Natural killer cell (primary cell): ENCODE measurements at regions of chrX and their contacts with region 1.

Region 1: DNA sequence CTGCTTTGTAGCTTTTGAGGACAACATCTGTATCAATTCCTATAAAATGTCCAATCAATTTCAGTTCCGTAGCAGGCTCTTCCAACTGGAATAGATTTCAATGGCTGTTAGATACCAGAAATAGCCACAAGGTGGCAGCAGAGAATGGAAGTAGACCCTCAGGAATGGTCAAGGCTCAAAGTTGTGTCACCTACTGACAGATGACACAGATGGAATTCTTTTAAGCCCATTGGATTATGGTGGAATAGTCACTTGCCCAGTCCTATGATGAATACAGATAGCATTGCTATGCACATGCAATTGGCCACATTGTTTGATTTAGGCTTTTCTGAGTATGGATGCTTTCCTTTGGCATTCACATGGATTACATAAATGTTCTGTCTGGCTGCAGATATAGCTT is 130.4 kb upstream of the RADX start:
- DNase-seq: peak in 1 of 2 donors; percentile 64
- ATAC-seq: peak in 2 of 3 donors; percentile 44 to 56
- H3K4me3 ChIP-seq: no peak overlapping the region
- H3K4me3 Mint-ChIP-seq: no peak overlapping the region
- H3K27ac ChIP-seq: no peak overlapping the region
- H3K27ac Mint-ChIP-seq: no peak overlapping the region
- H3K4me1 ChIP-seq: no peaks in the 10 kb centered on the region
- H3K4me1 Mint-ChIP-seq: peaks cover 17 to 23% of the 10 kb centered on the region in 2 donors
- H3K27me3 ChIP-seq: no peaks in the 10 kb centered on the region
- H3K27me3 Mint-ChIP-seq: peaks cover 0 to 14% of the 10 kb centered on the region in 2 donors
- CTCF ChIP-seq: peak; percentile 69

Region 2: DNA sequence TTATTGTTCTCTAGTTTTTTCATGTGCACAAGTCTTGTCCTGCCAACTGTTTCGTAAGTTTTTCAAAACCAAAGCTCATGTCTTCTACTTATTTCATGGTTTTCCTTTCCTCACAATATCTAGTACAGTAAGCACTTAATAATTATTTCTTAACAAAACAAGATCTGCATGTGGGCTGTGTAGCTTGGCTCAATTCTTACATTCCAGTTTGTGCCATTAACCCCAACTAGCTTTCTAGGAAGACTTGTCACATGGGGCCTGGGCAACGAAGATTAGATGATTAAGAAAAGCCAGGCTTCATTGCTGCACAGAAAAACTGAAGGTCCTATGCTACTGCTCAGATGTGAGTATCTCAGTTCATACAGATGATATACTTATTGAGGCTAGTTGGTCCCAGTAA is 1105.5 kb before region 1 on chrX:
- intact Hi-C with region 1: no loop called
- DNase-seq: no peak
- ATAC-seq: no peak
- H3K4me3 ChIP-seq: no peak overlapping the region
- H3K4me3 Mint-ChIP-seq: no peak overlapping the region
- H3K27ac ChIP-seq: no peak overlapping the region
- H3K27ac Mint-ChIP-seq: no peak overlapping the region
- H3K4me1 ChIP-seq: no peaks in the 10 kb centered on the region
- H3K4me1 Mint-ChIP-seq: no peaks in the 10 kb centered on the region
- H3K27me3 ChIP-seq: no peaks in the 10 kb centered on the region
- H3K27me3 Mint-ChIP-seq: no peaks in the 10 kb centered on the region
- CTCF ChIP-seq: no peak

Region 3: GRCh38 chrX:106300239-106300638 is 181.1 kb before region 1 on chrX:
- intact Hi-C with region 1: no loop called
- DNase-seq: no peak
- ATAC-seq: no peak
- H3K4me3 ChIP-seq: no peak overlapping the region
- H3K4me3 Mint-ChIP-seq: no peak overlapping the region
- H3K27ac ChIP-seq: no peak overlapping the region
- H3K27ac Mint-ChIP-seq: no peak overlapping the region
- H3K4me1 ChIP-seq: no peaks in the 10 kb centered on the region
- H3K4me1 Mint-ChIP-seq: no peaks in the 10 kb centered on the region
- H3K27me3 ChIP-seq: no peaks in the 10 kb centered on the region
- H3K27me3 Mint-ChIP-seq: no peaks in the 10 kb centered on the region
- CTCF ChIP-seq: no peak

Region 4: GRCh38 chrX:106499473-106499872 is 18.1 kb after region 1 on chrX:
- intact Hi-C with region 1: no loop called
- DNase-seq: no peak
- ATAC-seq: no peak
- H3K4me3 ChIP-seq: no peak overlapping the region
- H3K4me3 Mint-ChIP-seq: no peak overlapping the region
- H3K27ac ChIP-seq: no peak overlapping the region
- H3K27ac Mint-ChIP-seq: no peak overlapping the region
- H3K4me1 ChIP-seq: no peaks in the 10 kb centered on the region
- H3K4me1 Mint-ChIP-seq: no peaks in the 10 kb centered on the region
- H3K27me3 ChIP-seq: no peaks in the 10 kb centered on the region
- H3K27me3 Mint-ChIP-seq: peaks cover 0 to 18% of the 10 kb centered on the region in 2 donors
- CTCF ChIP-seq: no peak

Region 5: DNA sequence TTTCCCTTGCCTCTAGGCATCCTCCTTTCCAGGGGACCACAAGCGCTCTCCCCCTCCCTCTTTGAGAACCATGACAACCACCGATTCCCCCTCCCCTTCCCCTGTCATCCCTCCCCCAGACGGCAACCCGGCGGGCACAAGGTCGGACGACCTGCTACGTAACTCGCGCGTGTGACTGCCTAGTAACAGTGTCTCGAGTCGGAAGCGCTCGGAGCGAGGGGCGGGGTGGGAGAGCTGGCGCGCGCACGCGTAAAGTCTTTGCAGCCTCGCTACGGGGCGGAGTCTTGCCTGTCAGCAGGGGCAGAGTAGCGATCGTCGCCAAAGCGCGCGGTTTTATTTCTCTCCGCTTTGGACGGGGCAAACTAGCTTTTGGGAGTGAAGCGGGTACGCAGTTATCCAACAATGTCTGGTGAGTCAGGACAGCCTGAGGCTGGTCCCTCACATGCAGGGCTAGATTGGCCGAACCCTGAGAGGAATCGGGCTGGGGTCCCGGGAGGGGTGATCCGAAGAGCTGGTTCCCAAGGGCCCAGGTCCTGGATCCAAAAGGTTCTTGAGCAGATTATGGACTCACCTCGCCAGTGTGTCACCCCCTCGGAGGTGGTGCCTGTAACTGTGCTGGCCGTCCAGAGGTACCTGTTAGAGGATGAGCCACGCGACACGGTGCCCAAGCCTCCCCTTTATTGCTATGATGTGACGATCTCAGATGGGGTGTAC is 130.5 kb after region 1 on chrX and contains the start of gene RADX:
- intact Hi-C with region 1: loop called (anchors 10 kb)
- DNase-seq: peak; percentile 76 to 92
- ATAC-seq: peak; percentile 94 to 98 (median 96)
- H3K4me3 ChIP-seq: peak within 1 kb of the TSS; percentile 92
- H3K4me3 Mint-ChIP-seq: peak within 1 kb of the TSS; percentile 86
- H3K27ac ChIP-seq: peak within 1 kb of the TSS; percentile 80
- H3K27ac Mint-ChIP-seq: peak within 1 kb of the TSS; percentile 83 to 96
- H3K4me1 ChIP-seq: peaks cover 4% of the 10 kb centered on the region
- H3K4me1 Mint-ChIP-seq: peaks cover 20 to 22% of the 10 kb centered on the region in 2 donors
- H3K27me3 ChIP-seq: no peaks in the 10 kb centered on the region
- H3K27me3 Mint-ChIP-seq: peaks cover 0 to 47% of the 10 kb centered on the region in 2 donors
- CTCF ChIP-seq: no peak
- total RNA-seq, gene RADX: 4.6 to 7.5 (median 7.2) TPM

Region 6: GRCh38 chrX:106631615-106632014 is 150.3 kb after region 1 on chrX:
- intact Hi-C with region 1: no loop called
- DNase-seq: no peak
- ATAC-seq: no peak
- H3K4me3 ChIP-seq: no peak overlapping the region
- H3K4me3 Mint-ChIP-seq: no peak overlapping the region
- H3K27ac ChIP-seq: no peak overlapping the region
- H3K27ac Mint-ChIP-seq: no peak overlapping the region
- H3K4me1 ChIP-seq: no peaks in the 10 kb centered on the region
- H3K4me1 Mint-ChIP-seq: no peaks in the 10 kb centered on the region
- H3K27me3 ChIP-seq: no peaks in the 10 kb centered on the region
- H3K27me3 Mint-ChIP-seq: no peaks in the 10 kb centered on the region
- CTCF ChIP-seq: no peak

Region 7: DNA sequence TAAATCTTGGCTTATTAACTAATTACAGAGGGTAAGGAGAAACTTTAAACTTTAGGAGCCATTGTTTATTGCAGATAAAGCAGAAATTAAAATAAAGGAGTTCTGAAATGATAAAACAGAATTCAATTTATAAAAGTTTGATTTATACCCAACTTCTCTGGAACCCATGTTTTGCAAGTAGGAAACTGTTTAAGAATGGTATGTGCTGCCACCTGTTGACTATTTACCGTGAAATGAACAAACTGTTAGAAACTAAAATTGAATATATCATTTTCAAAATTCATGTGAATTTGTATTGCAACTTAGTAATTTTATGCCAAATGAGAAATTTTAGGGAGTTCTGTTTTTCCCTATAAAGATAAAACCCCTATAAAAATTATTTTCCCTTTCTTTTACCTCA is 310.2 kb after region 1 on chrX:
- intact Hi-C with region 1: loop called (anchors 10 kb)
- DNase-seq: peak in 1 of 2 donors; percentile 26
- ATAC-seq: no peak
- H3K4me3 ChIP-seq: no peak overlapping the region
- H3K4me3 Mint-ChIP-seq: no peak overlapping the region
- H3K27ac ChIP-seq: no peak overlapping the region
- H3K27ac Mint-ChIP-seq: no peak overlapping the region
- H3K4me1 ChIP-seq: no peaks in the 10 kb centered on the region
- H3K4me1 Mint-ChIP-seq: no peaks in the 10 kb centered on the region
- H3K27me3 ChIP-seq: no peaks in the 10 kb centered on the region
- H3K27me3 Mint-ChIP-seq: peaks cover 0 to 4% of the 10 kb centered on the region in 2 donors
- CTCF ChIP-seq: no peak